ENCODE measurements at regions of chr17 and their contacts with region 1.

Region 1: GRCh38 chr17:75345514-75346167 is 56.4 kb upstream of the SLC25A19 start:
- DNase-seq: no peak
- ATAC-seq: no peak
- H3K4me3 ChIP-seq: no peak overlapping the region
- H3K27ac ChIP-seq: no peak overlapping the region
- H3K4me1 ChIP-seq: peaks cover 74% of the 10 kb centered on the region
- H3K27me3 ChIP-seq: no peaks in the 10 kb centered on the region
- CTCF ChIP-seq: no peak

Region 2: GRCh38 chr17:74981979-74982662 is 363.5 kb before region 1 on chr17:
- intact Hi-C with region 1: no loop called
- DNase-seq: peak; percentile 74 to 80
- ATAC-seq: peak; percentile 78 to 85 (median 82)
- H3K4me3 ChIP-seq: peak overlapping the region; percentile 68
- H3K27ac ChIP-seq: peak overlapping the region; percentile 71
- H3K4me1 ChIP-seq: peaks cover 5% of the 10 kb centered on the region
- H3K27me3 ChIP-seq: peaks cover 0 to 41% (median 3%) of the 10 kb centered on the region in 3 donors
- CTCF ChIP-seq: no peak

Region 3: DNA sequence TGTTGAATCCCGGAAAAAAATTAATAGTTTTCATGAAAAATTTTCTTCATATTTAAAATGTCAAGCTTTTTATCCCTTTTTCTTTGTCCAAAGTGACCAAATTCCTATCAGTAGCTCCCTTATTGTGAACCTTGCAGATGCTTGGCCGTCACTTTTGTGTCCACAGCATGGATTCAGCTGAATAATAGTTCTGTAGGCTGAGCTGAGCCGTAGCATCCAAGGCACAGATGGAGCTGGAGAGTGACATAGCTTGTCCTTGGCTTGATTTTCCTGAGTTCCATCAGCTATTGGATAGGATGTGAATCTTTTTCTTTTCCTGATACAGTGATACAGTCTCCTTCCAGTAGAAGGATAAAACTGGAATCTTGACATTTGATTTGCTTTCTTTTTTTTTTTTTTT is 136.6 kb before region 1 on chr17:
- intact Hi-C with region 1: no loop called
- DNase-seq: no peak
- ATAC-seq: no peak
- H3K4me3 ChIP-seq: no peak overlapping the region
- H3K27ac ChIP-seq: no peak overlapping the region
- H3K4me1 ChIP-seq: peaks cover 14% of the 10 kb centered on the region
- H3K27me3 ChIP-seq: no peaks in the 10 kb centered on the region
- CTCF ChIP-seq: no peak

Region 4: DNA sequence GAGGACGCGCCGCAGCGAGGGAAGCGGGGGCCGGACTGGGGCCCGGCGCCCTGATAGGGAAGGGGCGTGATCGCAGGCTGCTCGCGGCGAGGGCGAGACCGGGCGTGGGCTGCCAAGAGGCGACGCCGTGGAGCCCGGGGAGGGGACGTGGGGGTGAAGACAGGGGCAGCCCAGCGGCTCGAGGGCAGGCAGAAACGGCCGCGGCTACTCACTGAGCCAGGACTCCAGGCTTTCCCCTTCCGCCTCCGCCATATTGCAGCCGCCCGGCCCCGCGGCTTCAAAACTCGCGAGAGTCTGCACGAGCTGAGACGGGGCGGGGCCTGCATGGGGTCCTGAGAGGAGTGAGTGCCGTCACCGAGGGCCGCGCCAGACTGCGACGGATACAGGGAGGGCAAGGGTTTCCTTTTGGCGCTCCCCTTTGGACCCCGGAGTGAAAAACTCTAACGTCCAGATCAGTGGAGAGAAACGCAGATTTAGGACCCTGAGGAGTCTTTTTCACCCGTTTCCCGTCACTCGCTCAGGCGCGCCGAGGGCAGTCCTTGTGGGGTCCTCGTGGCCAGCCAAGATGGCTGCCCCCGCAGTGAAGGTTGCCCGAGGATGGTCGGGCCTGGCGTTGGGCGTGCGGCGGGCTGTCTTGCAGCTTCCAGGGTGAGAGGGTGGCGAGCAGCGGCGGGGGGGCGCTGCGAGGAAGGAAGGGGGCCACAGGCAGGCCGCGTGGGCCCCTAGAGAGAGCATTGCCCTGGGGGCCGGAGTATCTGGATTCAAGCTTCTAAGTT is 84.1 kb before region 1 on chr17 and contains the starts of genes GGA3 and MRPS7:
- intact Hi-C with region 1: no loop called
- DNase-seq: peak; percentile 97 to 98
- ATAC-seq: peak; percentile 97 to 99 (median 98)
- H3K4me3 ChIP-seq: peak within 1 kb of the TSS; percentile 98
- H3K27ac ChIP-seq: peak within 1 kb of the TSS; percentile 96
- H3K4me1 ChIP-seq: peaks cover 30% of the 10 kb centered on the region
- H3K27me3 ChIP-seq: no peaks in the 10 kb centered on the region
- CTCF ChIP-seq: no peak
- total RNA-seq, gene GGA3: 21.3 to 40.6 (median 30.2) TPM
- total RNA-seq, gene MRPS7: 105 to 161 (median 131) TPM

Region 5: GRCh38 chr17:75405365-75406221 is 60.0 kb after region 1 on chr17 and contains the start of gene GRB2:
- intact Hi-C with region 1: no loop called
- DNase-seq: peak; percentile 99 to 100
- ATAC-seq: peak; percentile 95 to 98 (median 97)
- H3K4me3 ChIP-seq: peak within 1 kb of the TSS; percentile 99
- H3K27ac ChIP-seq: peak within 1 kb of the TSS; percentile 97
- H3K4me1 ChIP-seq: peaks cover 22% of the 10 kb centered on the region
- H3K27me3 ChIP-seq: no peaks in the 10 kb centered on the region
- CTCF ChIP-seq: no peak
- total RNA-seq, gene GRB2: 49.1 to 71.6 (median 58.1) TPM

Region 6: GRCh38 chr17:75738218-75738802 is 392.7 kb after region 1 on chr17:
- intact Hi-C with region 1: loop called in 1 of 2 experiments (anchors 10 kb)
- DNase-seq: peak in 1 of 2 donors; percentile 44
- ATAC-seq: peak in 3 of 4 donors; percentile 34 to 54 (median 44)
- H3K4me3 ChIP-seq: no peak overlapping the region
- H3K27ac ChIP-seq: no peak overlapping the region
- H3K4me1 ChIP-seq: no peaks in the 10 kb centered on the region
- H3K27me3 ChIP-seq: no peaks in the 10 kb centered on the region
- CTCF ChIP-seq: no peak

Measured in psoas muscle (tissue), 8 donors.